Activated B cell treated with CpG ODN at 0.5 μM for 24 hours (primary cell): ENCODE measurements at regions of chr1 and their contacts with region 1.

Region 1: GRCh38 chr1:178189814-178190213 is 95.9 kb downstream of the RASAL2 start:
- DNase-seq: no peak
- ATAC-seq: no peak
- H3K4me3 Mint-ChIP-seq: no peak overlapping the region
- H3K27ac Mint-ChIP-seq: no peak overlapping the region
- H3K4me1 Mint-ChIP-seq: peaks cover 3% of the 10 kb centered on the region
- H3K27me3 Mint-ChIP-seq: peaks cover 19% of the 10 kb centered on the region
- CTCF ChIP-seq: no peak

Region 2: DNA sequence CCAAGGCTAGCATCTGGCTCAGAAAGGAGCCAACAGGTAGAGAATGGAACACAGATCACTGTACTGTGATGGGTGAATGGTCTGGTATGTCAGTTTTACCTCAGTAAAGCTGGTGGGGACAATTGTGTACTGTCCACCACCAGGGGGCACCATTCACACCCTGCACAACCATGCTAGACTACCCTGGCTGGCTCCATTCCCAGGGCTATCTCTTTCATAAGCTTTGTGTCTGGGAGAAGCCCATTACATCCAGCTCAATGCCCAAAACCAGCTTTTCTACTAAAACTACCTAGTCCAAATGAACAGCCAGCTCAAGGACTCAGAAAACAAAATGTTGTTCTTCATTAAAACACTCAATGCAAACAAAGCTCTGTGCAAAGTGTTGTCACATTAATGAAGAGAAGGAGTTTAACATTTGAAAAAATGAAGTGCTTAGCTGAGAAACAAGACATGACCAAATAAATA is 157.9 kb before region 1 on chr1:
- CTCF ChIA-PET with region 1: no interaction called
- POLR2A ChIA-PET with region 1: no interaction called
- intact Hi-C with region 1: loop called (anchors 5 kb)
- DNase-seq: no peak
- ATAC-seq: peak; percentile 31
- H3K4me3 Mint-ChIP-seq: no peak overlapping the region
- H3K27ac Mint-ChIP-seq: no peak overlapping the region
- H3K4me1 Mint-ChIP-seq: no peaks in the 10 kb centered on the region
- H3K27me3 Mint-ChIP-seq: peaks cover 8% of the 10 kb centered on the region
- CTCF ChIP-seq: no peak